ENCODE measurements at regions of chr1 and their contacts with region 1.

Region 1: DNA sequence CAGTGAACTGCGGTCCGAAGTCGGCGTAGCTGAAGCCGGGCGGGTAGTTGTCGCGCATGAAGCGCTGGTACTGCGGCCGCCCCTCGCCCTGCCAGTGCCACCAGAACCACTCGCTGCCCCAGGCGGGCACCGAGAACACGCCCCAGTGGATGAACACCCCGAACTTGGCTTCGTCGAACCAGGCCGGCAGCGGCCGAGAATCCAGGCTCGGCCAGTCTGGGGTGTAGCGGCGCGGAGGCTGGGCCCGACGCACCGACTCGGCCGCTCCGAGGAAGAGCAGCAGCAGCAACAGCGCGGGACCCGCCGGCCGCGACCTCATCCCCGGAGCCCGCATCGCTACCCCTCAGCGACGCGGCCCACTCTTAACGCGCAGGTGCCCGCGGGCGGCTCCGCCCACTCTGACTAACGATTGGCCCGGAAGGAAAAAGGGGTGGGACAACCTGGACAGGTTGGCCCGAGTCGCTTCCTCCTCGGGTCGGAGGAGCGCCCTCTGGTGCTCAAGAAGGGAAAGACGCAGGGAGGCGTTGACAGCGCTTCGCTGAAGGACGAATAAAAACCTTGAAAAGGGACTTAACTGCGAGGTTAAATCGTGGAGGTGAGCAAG is at the start of gene FUCA1:
- DNase-seq: peak; percentile 91 to 98 (median 96)
- ATAC-seq: peak; percentile 98
- H3K4me3 ChIP-seq: peak within 1 kb of the TSS; percentile 77 to 84
- H3K4me3 Mint-ChIP-seq: peak within 1 kb of the TSS; percentile 85
- H3K27ac ChIP-seq: peak within 1 kb of the TSS; percentile 67 to 69
- H3K27ac Mint-ChIP-seq: peak within 1 kb of the TSS; percentile 87
- H3K4me1 ChIP-seq: peaks cover 23% of the 10 kb centered on the region
- H3K4me1 Mint-ChIP-seq: peaks cover 26% of the 10 kb centered on the region
- H3K27me3 ChIP-seq: no peaks in the 10 kb centered on the region
- H3K27me3 Mint-ChIP-seq: no peaks in the 10 kb centered on the region
- CTCF ChIP-seq: peak; percentile 72
- total RNA-seq, gene FUCA1: 5.3 to 5.7 TPM

Region 2: GRCh38 chr1:23691499-23692307 is 176.4 kb before region 1 on chr1 and contains the start of gene RPL11:
- CTCF ChIA-PET with region 1: no interaction called
- POLR2A ChIA-PET with region 1: no interaction called
- intact Hi-C with region 1: loop called (anchors 1 kb)
- DNase-seq: peak; percentile 73 to 95 (median 88)
- ATAC-seq: peak; percentile 99
- H3K4me3 ChIP-seq: peak within 1 kb of the TSS; percentile 68 to 84
- H3K4me3 Mint-ChIP-seq: peak within 1 kb of the TSS; percentile 96
- H3K27ac ChIP-seq: peak within 1 kb of the TSS; percentile 74 to 87
- H3K27ac Mint-ChIP-seq: peak within 1 kb of the TSS; percentile 97
- H3K4me1 ChIP-seq: peaks cover 41% of the 10 kb centered on the region
- H3K4me1 Mint-ChIP-seq: peaks cover 46% of the 10 kb centered on the region
- H3K27me3 ChIP-seq: no peaks in the 10 kb centered on the region
- H3K27me3 Mint-ChIP-seq: no peaks in the 10 kb centered on the region
- CTCF ChIP-seq: peak; percentile 77
- total RNA-seq, gene RPL11: 2,153 to 2,178 TPM

Region 3: GRCh38 chr1:23763041-23763577 is 104.9 kb before region 1 on chr1:
- CTCF ChIA-PET with region 1: no interaction called
- POLR2A ChIA-PET with region 1: no interaction called
- intact Hi-C with region 1: no loop called
- DNase-seq: no peak
- ATAC-seq: no peak
- H3K4me3 ChIP-seq: no peak overlapping the region
- H3K4me3 Mint-ChIP-seq: no peak overlapping the region
- H3K27ac ChIP-seq: no peak overlapping the region
- H3K27ac Mint-ChIP-seq: no peak overlapping the region
- H3K4me1 ChIP-seq: no peaks in the 10 kb centered on the region
- H3K4me1 Mint-ChIP-seq: peaks cover 3% of the 10 kb centered on the region
- H3K27me3 ChIP-seq: no peaks in the 10 kb centered on the region
- H3K27me3 Mint-ChIP-seq: no peaks in the 10 kb centered on the region
- CTCF ChIP-seq: no peak

Region 4: DNA sequence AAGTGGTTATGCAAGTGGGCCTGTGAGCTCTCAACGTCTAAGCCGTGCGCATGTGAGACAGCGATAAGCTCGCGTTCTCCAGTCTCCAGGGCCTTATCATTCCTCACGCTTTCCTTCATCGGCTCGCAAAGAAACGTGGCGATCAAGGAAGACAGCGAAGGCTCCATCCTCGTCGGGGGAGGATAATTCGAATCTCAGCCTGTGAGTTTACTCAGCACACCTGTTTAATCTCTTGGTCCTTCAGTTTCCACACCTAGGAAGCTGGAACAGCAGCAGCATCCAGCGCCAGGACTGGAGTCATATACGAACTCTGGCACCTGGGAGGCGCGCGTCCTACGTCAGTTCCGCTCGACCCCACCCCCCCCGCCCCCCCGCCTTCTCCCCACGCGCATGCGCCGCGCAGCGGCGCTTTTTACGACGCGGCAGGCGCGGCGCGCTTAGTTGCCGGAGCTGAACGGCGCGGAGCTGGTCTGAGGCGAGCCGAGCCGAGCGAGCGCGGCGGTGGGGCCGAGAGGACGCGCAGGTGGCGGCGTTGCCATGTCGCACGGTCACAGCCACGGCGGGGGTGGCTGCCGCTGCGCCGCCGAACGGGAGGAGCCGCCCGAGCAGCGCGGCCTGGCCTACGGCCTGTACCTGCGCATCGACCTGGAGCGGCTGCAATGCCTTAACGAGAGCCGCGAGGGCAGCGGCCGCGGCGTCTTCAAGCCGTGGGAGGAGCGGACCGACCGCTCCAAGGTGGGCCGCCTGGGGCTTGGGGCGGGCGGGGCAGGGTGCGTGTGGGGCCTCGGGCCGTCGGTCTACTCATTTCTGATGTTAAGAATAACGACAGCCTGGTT is 89.9 kb before region 1 on chr1 and contains the start of gene PITHD1:
- CTCF ChIA-PET with region 1: no interaction called
- POLR2A ChIA-PET with region 1: no interaction called
- intact Hi-C with region 1: loop called (anchors 1 kb)
- DNase-seq: peak; percentile 59 to 91 (median 78)
- ATAC-seq: peak; percentile 81
- H3K4me3 ChIP-seq: peak within 1 kb of the TSS; percentile 88 to 99
- H3K4me3 Mint-ChIP-seq: peak within 1 kb of the TSS; percentile 94
- H3K27ac ChIP-seq: peak within 1 kb of the TSS; percentile 87 to 95
- H3K27ac Mint-ChIP-seq: peak within 1 kb of the TSS; percentile 97
- H3K4me1 ChIP-seq: peaks cover 25% of the 10 kb centered on the region
- H3K4me1 Mint-ChIP-seq: peaks cover 54% of the 10 kb centered on the region
- H3K27me3 ChIP-seq: no peaks in the 10 kb centered on the region
- H3K27me3 Mint-ChIP-seq: no peaks in the 10 kb centered on the region
- CTCF ChIP-seq: no peak
- total RNA-seq, gene PITHD1: 112 to 117 TPM

Region 5: GRCh38 chr1:23825076-23825761 is 42.8 kb before region 1 on chr1 and contains the start of gene HMGCL:
- CTCF ChIA-PET with region 1: no interaction called
- POLR2A ChIA-PET with region 1: no interaction called
- intact Hi-C with region 1: loop called (anchors 1 kb)
- DNase-seq: peak; percentile 70 to 95 (median 89)
- ATAC-seq: peak; percentile 98
- H3K4me3 ChIP-seq: peak within 1 kb of the TSS; percentile 96 to 97
- H3K4me3 Mint-ChIP-seq: peak within 1 kb of the TSS; percentile 93
- H3K27ac ChIP-seq: peak within 1 kb of the TSS; percentile 91 to 94
- H3K27ac Mint-ChIP-seq: peak within 1 kb of the TSS; percentile 96
- H3K4me1 ChIP-seq: peaks cover 10% of the 10 kb centered on the region
- H3K4me1 Mint-ChIP-seq: peaks cover 28% of the 10 kb centered on the region
- H3K27me3 ChIP-seq: no peaks in the 10 kb centered on the region
- H3K27me3 Mint-ChIP-seq: no peaks in the 10 kb centered on the region
- CTCF ChIP-seq: no peak
- total RNA-seq, gene HMGCL: 9.2 to 10.2 TPM

Region 6: DNA sequence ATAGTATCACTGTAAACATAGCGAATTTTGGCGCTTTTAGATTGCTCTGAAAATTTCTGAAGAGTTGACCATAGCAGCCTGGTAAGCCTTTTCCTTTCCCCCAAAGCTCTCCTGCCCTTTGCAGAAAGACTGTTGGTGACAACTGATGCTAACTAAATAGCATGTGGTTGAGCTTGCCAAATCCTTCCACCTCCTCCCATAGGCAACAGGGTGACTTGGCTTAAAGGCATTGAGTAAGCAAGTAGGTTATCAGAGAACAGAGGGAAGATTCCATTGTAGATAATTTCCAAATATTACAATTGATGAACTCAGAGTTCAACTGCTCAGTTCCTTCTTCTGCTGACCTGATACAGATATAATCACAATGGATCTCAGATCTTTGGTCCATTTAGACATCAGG is 22.9 kb before region 1 on chr1:
- CTCF ChIA-PET with region 1: no interaction called
- POLR2A ChIA-PET with region 1: no interaction called
- intact Hi-C with region 1: no loop called
- DNase-seq: no peak
- ATAC-seq: no peak
- H3K4me3 ChIP-seq: no peak overlapping the region
- H3K4me3 Mint-ChIP-seq: no peak overlapping the region
- H3K27ac ChIP-seq: no peak overlapping the region
- H3K27ac Mint-ChIP-seq: no peak overlapping the region
- H3K4me1 ChIP-seq: no peaks in the 10 kb centered on the region
- H3K4me1 Mint-ChIP-seq: no peaks in the 10 kb centered on the region
- H3K27me3 ChIP-seq: no peaks in the 10 kb centered on the region
- H3K27me3 Mint-ChIP-seq: no peaks in the 10 kb centered on the region
- CTCF ChIP-seq: no peak

Region 7: DNA sequence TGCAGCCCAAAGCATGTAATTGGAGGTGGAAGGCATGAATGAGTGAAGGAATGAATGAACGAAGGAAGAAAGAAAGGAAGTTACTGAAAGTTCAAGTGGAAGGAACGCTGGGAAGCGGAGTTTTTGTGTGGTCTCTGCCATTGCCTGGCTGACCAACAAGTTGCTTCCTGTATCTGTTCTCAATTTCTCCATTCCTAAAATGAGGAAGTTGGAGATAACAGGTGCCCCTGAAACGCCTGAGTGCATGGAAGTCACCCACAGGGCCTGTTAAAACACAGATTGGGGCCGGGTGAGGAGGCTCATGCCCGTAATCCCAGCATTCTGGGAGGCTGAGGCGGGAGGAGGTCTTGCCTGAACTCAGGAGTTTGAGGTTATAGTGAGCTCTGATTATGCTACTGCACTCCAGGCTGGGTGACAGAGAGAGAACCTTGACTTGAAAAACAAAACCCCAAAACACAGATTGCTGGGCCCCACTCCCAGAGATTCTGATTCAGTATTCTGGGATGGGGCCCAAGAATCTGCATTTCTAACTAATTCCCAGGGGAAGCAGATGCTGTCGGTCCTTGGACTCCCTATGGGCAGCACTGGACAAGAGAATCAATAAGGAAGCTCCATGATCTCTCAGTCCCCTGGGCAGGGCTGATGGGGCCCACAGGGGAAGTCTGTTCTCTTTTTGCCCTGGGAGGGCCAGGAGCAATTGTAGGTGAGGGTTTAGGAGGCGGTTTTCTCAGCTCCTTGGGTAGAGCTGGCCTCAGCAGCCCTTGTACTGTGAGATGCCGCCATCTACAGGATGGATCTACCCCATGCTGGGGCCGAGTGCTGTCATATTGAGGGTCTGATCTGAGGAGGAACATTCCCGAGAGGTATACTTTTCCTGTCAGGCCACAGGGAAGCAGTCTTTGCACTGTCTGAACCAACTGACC is 48.4 kb after region 1 on chr1:
- CTCF ChIA-PET with region 1: interaction called, 6 read pairs
- POLR2A ChIA-PET with region 1: no interaction called
- intact Hi-C with region 1: loop called (anchors 2 to 5 kb)
- DNase-seq: peak; percentile 36 to 86 (median 63)
- ATAC-seq: peak; percentile 98
- H3K4me3 ChIP-seq: no peak overlapping the region
- H3K4me3 Mint-ChIP-seq: no peak overlapping the region
- H3K27ac ChIP-seq: no peak overlapping the region
- H3K27ac Mint-ChIP-seq: no peak overlapping the region
- H3K4me1 ChIP-seq: peaks cover 35% of the 10 kb centered on the region
- H3K4me1 Mint-ChIP-seq: peaks cover 36% of the 10 kb centered on the region
- H3K27me3 ChIP-seq: no peaks in the 10 kb centered on the region
- H3K27me3 Mint-ChIP-seq: no peaks in the 10 kb centered on the region
- CTCF ChIP-seq: peak; percentile 86

Region 8: GRCh38 chr1:24015221-24016210 is 147.5 kb after region 1 on chr1:
- CTCF ChIA-PET with region 1: no interaction called
- POLR2A ChIA-PET with region 1: no interaction called
- intact Hi-C with region 1: no loop called
- DNase-seq: no peak
- ATAC-seq: no peak
- H3K4me3 ChIP-seq: no peak overlapping the region
- H3K4me3 Mint-ChIP-seq: no peak overlapping the region
- H3K27ac ChIP-seq: no peak overlapping the region
- H3K27ac Mint-ChIP-seq: no peak overlapping the region
- H3K4me1 ChIP-seq: no peaks in the 10 kb centered on the region
- H3K4me1 Mint-ChIP-seq: peaks cover 2% of the 10 kb centered on the region
- H3K27me3 ChIP-seq: no peaks in the 10 kb centered on the region
- H3K27me3 Mint-ChIP-seq: peaks cover 6% of the 10 kb centered on the region
- CTCF ChIP-seq: no peak

Measured in CD8-positive, alpha-beta T cell (primary cell).